Heart left ventricle (tissue), 16 donors: ENCODE measurements at regions of chr20 and their contacts with region 1.

Region 1: GRCh38 chr20:44187051-44187762 is at the start of gene JPH2:
- DNase-seq: peak; percentile 76 to 88 (median 84)
- ATAC-seq: peak; percentile 88 to 90 (median 88)
- H3K4me3 ChIP-seq: peak within 1 kb of the TSS; percentile 46 to 87 (median 65)
- H3K27ac ChIP-seq: peak within 1 kb of the TSS; percentile 72 to 97 (median 92)
- H3K4me1 ChIP-seq: peaks cover 0 to 33% (median 19%) of the 10 kb centered on the region in 12 donors
- H3K27me3 ChIP-seq: peaks cover 0 to 21% (median 0%) of the 10 kb centered on the region in 9 donors
- CTCF ChIP-seq: no peak
- POLR2A ChIP-seq: peak; percentile 58 to 69
- total RNA-seq, gene JPH2: 99.5 to 219 (median 166) TPM

Region 2: DNA sequence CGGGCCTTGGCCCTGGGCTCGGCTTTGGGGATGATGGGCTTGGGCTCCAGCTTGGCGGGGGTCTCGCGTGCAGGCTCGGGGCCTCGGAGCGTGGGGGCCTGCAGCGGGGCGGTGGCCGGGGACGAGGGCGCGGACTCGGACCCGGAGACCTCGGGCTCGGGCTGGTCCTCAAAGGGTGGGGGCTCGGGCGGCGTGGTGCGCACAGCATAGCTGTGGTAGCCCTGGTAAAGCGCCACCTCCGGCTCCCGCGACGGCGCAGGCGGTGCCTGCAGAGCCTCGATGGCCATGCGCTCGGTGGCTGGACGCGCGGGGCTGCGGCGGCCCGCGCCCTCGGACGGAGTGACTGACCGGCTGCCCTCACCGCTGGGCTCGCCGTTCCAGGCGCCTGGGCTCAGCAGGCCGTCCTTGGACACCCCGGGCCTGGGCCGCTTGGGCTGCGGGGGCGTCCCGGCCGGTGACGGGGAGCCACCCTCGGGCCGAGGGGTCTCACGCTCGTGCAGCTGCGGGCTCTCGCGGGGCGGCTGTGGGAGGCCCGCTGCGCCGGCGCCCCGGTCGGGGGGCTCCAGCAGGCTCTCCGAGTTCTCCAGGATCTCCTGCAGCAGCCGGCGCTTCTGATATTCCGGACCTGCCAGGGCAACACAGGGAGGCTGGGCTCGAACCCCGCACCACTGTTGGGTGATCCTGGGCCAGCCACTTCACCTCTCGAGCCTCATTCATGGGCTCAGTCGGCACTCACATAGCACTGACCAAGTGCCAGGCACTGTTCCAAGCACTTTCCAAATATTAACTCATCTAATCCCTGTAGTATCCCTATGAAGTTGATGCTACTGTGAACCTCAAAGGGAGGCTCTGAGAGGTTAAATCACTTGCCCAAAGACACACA is 71.2 kb before region 1 on chr20:
- intact Hi-C with region 1: loop called (anchors 1 to 2 kb)
- DNase-seq: no peak
- ATAC-seq: peak in 2 of 4 donors; percentile 2
- H3K4me3 ChIP-seq: no peak overlapping the region
- H3K27ac ChIP-seq: peak overlapping the region in 9 of 12 donors; percentile 1 to 75 (median 30)
- H3K4me1 ChIP-seq: peaks cover 0 to 63% (median 5%) of the 10 kb centered on the region in 12 donors
- H3K27me3 ChIP-seq: peaks cover 0 to 17% (median 0%) of the 10 kb centered on the region in 9 donors
- CTCF ChIP-seq: no peak
- POLR2A ChIP-seq: no peak

Region 3: DNA sequence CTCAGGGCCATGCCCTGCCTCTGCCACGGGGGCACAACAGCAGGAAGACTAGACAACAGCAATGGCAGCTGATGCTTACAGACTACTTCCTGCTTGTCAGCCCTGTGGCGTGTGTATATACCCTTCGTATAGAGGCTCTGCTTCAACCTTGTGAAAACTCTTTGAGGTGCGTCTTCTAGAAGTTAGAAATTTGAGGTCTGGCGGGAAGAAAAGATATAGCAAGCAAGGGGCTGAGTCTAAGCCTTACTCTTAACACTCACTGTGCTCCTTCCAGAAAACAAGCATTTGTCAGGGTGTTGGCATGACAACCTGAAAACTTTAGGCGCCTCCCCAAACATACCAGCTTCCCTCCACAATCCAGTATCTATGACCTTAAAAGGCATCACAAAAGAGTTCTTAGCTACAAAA is 33.6 kb before region 1 on chr20:
- intact Hi-C with region 1: loop called in 4 of 10 experiments (anchors 5 kb)
- DNase-seq: peak in 1 of 5 donors; percentile 14
- ATAC-seq: no peak
- H3K4me3 ChIP-seq: no peak overlapping the region
- H3K27ac ChIP-seq: peak overlapping the region in 10 of 12 donors; percentile 32 to 94 (median 88)
- H3K4me1 ChIP-seq: peaks cover 0 to 70% (median 22%) of the 10 kb centered on the region in 12 donors
- H3K27me3 ChIP-seq: no peaks in the 10 kb centered on the region
- CTCF ChIP-seq: no peak
- POLR2A ChIP-seq: no peak

Region 4: GRCh38 chr20:44166477-44166876 is 20.7 kb before region 1 on chr20:
- intact Hi-C with region 1: loop called in 1 of 10 experiments (anchors 1 kb)
- DNase-seq: peak in 4 of 5 donors; percentile 69 to 76 (median 75)
- ATAC-seq: peak; percentile 85 to 93 (median 90)
- H3K4me3 ChIP-seq: peak overlapping the region in 5 of 12 donors; percentile 0 to 16 (median 11)
- H3K27ac ChIP-seq: peak overlapping the region; percentile 63 to 94 (median 83)
- H3K4me1 ChIP-seq: peaks cover 6 to 73% (median 38%) of the 10 kb centered on the region in 12 donors
- H3K27me3 ChIP-seq: no peaks in the 10 kb centered on the region
- CTCF ChIP-seq: no peak
- POLR2A ChIP-seq: peak in 1 of 2 donors; percentile 24

Region 5: DNA sequence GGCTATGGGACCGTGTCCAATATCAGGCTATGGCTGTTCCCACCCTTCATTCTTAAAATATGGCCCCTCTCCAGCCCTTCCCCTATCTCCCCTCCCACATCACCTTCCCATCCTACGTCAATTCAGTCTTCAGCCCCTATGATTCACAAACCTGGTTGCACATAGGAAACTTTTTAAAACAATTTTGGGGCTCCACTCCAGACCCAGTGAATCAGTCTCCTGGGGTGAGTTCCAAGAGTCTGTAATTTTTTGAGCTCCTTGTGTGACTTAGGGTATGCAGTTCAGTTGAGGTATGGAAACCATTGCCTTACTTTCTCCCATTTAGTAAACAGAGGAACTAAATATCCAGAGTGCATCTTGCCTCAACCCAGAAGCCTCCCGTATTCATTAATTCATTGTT is 173.8 kb after region 1 on chr20:
- intact Hi-C with region 1: no loop called
- DNase-seq: no peak
- ATAC-seq: no peak
- H3K4me3 ChIP-seq: no peak overlapping the region
- H3K27ac ChIP-seq: no peak overlapping the region
- H3K4me1 ChIP-seq: peaks cover 0 to 7% (median 0%) of the 10 kb centered on the region in 12 donors
- H3K27me3 ChIP-seq: peaks cover 0 to 6% (median 0%) of the 10 kb centered on the region in 9 donors
- CTCF ChIP-seq: no peak
- POLR2A ChIP-seq: no peak